K562 (cell line): ENCODE measurements at regions of chr19 and their contacts with region 1.

Region 1: GRCh38 chr19:10332955-10333757 is at the start of gene RAVER1:
- DNase-seq: peak; percentile 96 to 99 (median 98)
- ATAC-seq: peak; percentile 91
- H3K4me3 ChIP-seq: peak within 1 kb of the TSS; percentile 93
- H3K27ac ChIP-seq: peak within 1 kb of the TSS; percentile 98
- H3K4me1 ChIP-seq: peaks cover 15 to 54% of the 10 kb centered on the region in 2 experiments; a peak in 4 of 5 replicates
- H3K27me3 ChIP-seq: no peaks in the 10 kb centered on the region
- CTCF ChIP-seq: no peak
- EP300 ChIP-seq: no peak; the same call in 1 of the 2 replicates
- POLR2A ChIP-seq: peak; percentile 98
- RAD21 ChIP-seq: 0 out of 4 replicates have a peak, but pooled peaks of 1 of the 2 experiments have one; percentile 3
- polyA plus RNA-seq, gene RAVER1: 0.06 to 0.08 TPM

Region 2: GRCh38 chr19:10085641-10086590 is 247.2 kb before region 1 on chr19 and contains the start of gene SHFL:
- CTCF ChIA-PET with region 1: no interaction called
- POLR2A ChIA-PET with region 1: no interaction called
- in situ Hi-C with region 1: no loop called
- intact Hi-C with region 1: loop called (anchors 2 kb)
- DNase-seq: peak; percentile 85 to 94 (median 91)
- ATAC-seq: peak; percentile 96
- H3K4me3 ChIP-seq: peak within 1 kb of the TSS; percentile 79
- H3K27ac ChIP-seq: peak within 1 kb of the TSS; percentile 69
- H3K4me1 ChIP-seq: peaks cover 0 to 20% of the 10 kb centered on the region in 2 experiments; a peak in 2 of 5 replicates
- H3K27me3 ChIP-seq: no peaks in the 10 kb centered on the region; a peak in 2 of 5 replicates
- CTCF ChIP-seq: no peak
- EP300 ChIP-seq: no peak
- POLR2A ChIP-seq: peak; percentile 38; the same call in 1 of the 2 replicates
- RAD21 ChIP-seq: no peak
- polyA plus RNA-seq, gene SHFL: 1.5 to 2.6 TPM

Region 3: GRCh38 chr19:10184636-10185035 is 148.5 kb before region 1 on chr19:
- CTCF ChIA-PET with region 1: no interaction called
- POLR2A ChIA-PET with region 1: no interaction called
- in situ Hi-C with region 1: no loop called
- intact Hi-C with region 1: no loop called
- DNase-seq: no peak
- ATAC-seq: no peak; the same call in 2 of the 3 replicates
- H3K4me3 ChIP-seq: no peak overlapping the region
- H3K27ac ChIP-seq: no peak overlapping the region
- H3K4me1 ChIP-seq: peaks cover 3 to 7% of the 10 kb centered on the region in 2 experiments; a peak in 3 of 5 replicates
- H3K27me3 ChIP-seq: no peaks in the 10 kb centered on the region
- CTCF ChIP-seq: no peak
- EP300 ChIP-seq: no peak
- POLR2A ChIP-seq: no peak
- RAD21 ChIP-seq: no peak

Region 4: GRCh38 chr19:10289167-10289835 is 43.9 kb before region 1 on chr19:
- CTCF ChIA-PET with region 1: no interaction called
- POLR2A ChIA-PET with region 1: interaction called, 23 read pairs
- in situ Hi-C with region 1: no loop called
- intact Hi-C with region 1: loop called (anchors 2 kb)
- DNase-seq: peak; percentile 66 to 94 (median 74)
- ATAC-seq: peak; percentile 12
- H3K4me3 ChIP-seq: peak overlapping the region; percentile 79
- H3K27ac ChIP-seq: peak overlapping the region; percentile 96
- H3K4me1 ChIP-seq: peaks cover 29 to 92% of the 10 kb centered on the region in 2 experiments; a peak in 4 of 5 replicates
- H3K27me3 ChIP-seq: no peaks in the 10 kb centered on the region
- CTCF ChIP-seq: peak in 1 of 3 experiments; percentile 32; a peak in 2 of 6 replicates
- EP300 ChIP-seq: no peak; the same call in 1 of the 2 replicates
- POLR2A ChIP-seq: peak; percentile 73
- RAD21 ChIP-seq: peak in 1 of 2 experiments; percentile 21; a peak in 2 of 4 replicates

Region 5: DNA sequence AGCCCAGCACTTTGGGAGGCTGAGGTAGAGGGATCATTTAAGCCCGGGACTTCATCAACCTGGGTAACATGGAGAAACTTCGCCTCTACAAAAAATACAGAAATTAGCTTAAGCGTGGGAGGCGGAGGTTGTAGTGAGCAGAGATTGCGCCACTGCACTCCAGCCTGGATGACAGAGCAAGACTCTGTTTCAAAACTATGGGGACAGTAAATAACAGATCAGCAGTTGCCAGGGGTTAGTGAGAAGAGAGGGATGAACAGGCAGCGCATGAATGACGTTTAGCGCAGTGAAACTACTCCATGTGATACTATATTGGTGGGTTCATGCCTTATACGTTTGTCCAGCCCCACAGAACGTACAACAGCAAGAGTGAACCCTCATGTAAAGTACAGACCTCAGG is 13.4 kb after region 1 on chr19:
- CTCF ChIA-PET with region 1: no interaction called
- POLR2A ChIA-PET with region 1: interaction called, 29 read pairs
- in situ Hi-C with region 1: no loop called
- intact Hi-C with region 1: no loop called
- DNase-seq: peak in 1 of 4 experiments; percentile 49
- ATAC-seq: peak; percentile 91
- H3K4me3 ChIP-seq: no peak overlapping the region
- H3K27ac ChIP-seq: peak overlapping the region; percentile 45; the same call in 2 of the 3 replicates
- H3K4me1 ChIP-seq: peaks cover 0 to 8% of the 10 kb centered on the region in 2 experiments; a peak in 2 of 5 replicates
- H3K27me3 ChIP-seq: no peaks in the 10 kb centered on the region
- CTCF ChIP-seq: no peak
- EP300 ChIP-seq: 0 out of 2 replicates have a peak, but pooled peaks have one; percentile 25
- POLR2A ChIP-seq: no peak
- RAD21 ChIP-seq: no peak

Region 6: GRCh38 chr19:10388957-10389356 is 55.8 kb after region 1 on chr19:
- CTCF ChIA-PET with region 1: no interaction called
- POLR2A ChIA-PET with region 1: no interaction called
- in situ Hi-C with region 1: no loop called
- intact Hi-C with region 1: loop called (anchors 2 kb)
- DNase-seq: peak; percentile 57 to 91 (median 68)
- ATAC-seq: peak; percentile 84
- H3K4me3 ChIP-seq: no peak overlapping the region
- H3K27ac ChIP-seq: no peak overlapping the region
- H3K4me1 ChIP-seq: peaks cover 0 to 6% of the 10 kb centered on the region in 2 experiments; a peak in 2 of 5 replicates
- H3K27me3 ChIP-seq: no peaks in the 10 kb centered on the region
- CTCF ChIP-seq: peak; percentile 92 to 95 (median 94)
- EP300 ChIP-seq: no peak
- POLR2A ChIP-seq: peak; percentile 56
- RAD21 ChIP-seq: peak; percentile 92 to 96

Region 7: DNA sequence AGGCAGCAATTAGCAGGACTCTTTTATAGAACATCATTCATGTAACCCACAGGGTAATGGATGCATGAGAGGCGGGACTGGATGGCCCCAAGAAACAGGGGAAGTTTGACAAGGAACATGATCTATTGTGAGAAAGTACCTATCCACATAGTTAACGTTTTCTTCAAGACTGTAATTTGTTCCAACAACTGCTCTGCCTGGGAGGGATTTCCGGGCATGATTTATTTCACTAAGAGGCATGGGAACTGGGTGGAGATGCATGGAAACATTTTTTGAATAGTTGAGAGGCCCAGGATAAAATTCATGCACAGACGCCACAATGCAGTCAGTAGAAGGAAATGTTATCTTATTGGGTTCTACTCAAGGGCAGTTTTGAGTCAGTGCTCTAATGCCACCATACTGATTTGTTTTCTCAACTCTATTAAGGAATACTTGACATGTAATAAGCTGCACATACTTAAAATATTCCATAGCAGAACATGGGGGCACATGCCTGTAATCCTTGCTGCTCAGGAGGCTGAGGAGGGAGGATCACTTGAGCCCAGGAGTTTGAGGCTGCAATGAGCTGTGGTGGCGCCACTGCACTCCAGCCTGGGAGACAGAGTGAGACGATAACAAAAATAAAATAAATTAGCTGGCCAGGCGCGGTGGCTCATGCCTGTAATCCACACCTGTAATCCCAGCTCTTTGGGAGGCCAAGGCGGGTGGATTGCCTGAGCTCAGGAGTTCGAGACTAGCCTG is 200.7 kb after region 1 on chr19:
- CTCF ChIA-PET with region 1: no interaction called
- POLR2A ChIA-PET with region 1: no interaction called
- in situ Hi-C with region 1: no loop called
- intact Hi-C with region 1: no loop called
- DNase-seq: no peak
- ATAC-seq: no peak
- H3K4me3 ChIP-seq: no peak overlapping the region
- H3K27ac ChIP-seq: no peak overlapping the region
- H3K4me1 ChIP-seq: peaks cover 0 to 6% of the 10 kb centered on the region in 2 experiments; a peak in 3 of 5 replicates
- H3K27me3 ChIP-seq: no peaks in the 10 kb centered on the region; a peak in 1 of 5 replicates
- CTCF ChIP-seq: no peak
- EP300 ChIP-seq: no peak
- POLR2A ChIP-seq: no peak
- RAD21 ChIP-seq: no peak